ENCODE measurements at regions of chr20 and their contacts with region 1.

Region 1: DNA sequence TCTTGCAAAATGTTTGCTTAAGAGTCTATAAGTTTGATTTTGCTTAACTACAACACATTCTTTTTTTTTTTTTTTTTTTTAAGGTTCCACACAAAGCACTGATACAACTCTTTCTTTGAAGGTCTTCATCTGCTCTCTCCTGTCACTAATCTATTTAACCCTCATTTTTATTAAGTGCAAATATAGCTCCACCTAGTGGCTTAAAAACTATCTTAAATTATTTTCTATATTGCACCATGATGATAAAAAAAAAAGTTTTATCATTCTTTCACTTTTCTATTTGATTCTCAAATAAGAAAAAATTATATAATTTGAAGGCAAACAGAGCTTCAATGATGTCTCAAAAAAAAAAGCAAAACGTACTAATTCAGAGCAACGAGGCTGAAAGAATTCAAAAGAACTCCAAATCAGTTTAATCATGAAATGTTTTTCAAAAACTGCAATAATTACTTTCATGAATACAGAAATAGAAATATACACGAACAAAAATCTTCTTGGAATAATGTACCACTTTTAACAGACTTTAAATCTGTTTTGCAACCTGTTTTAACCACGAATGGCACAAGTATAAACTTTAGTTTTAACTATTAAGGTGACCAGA is 12.8 kb downstream of the ESF1 start:
- DNase-seq: peak; percentile 35
- CTCF ChIP-seq: peak; percentile 10

Region 2: DNA sequence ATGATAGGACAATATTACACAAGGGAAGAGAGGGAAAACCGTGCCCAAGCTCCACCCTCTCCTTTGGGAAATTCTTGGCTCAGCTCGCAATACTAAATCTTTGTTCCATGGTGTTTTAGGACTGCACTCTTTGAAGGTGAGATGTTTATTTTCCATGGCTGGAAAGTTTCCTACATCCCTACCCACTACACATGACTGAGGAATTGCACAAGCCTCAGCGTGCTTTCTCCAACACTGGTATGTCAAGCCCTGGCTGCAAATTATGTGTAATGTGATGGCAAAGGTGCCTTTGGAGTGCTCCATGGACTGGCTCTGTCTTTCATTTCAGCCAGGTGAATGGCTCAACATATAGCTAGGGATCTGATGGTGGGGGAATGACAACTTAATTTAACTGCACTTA is 416.5 kb before region 1 on chr20:
- in situ Hi-C with region 1: no loop called
- DNase-seq: no peak
- CTCF ChIP-seq: no peak

Region 3: DNA sequence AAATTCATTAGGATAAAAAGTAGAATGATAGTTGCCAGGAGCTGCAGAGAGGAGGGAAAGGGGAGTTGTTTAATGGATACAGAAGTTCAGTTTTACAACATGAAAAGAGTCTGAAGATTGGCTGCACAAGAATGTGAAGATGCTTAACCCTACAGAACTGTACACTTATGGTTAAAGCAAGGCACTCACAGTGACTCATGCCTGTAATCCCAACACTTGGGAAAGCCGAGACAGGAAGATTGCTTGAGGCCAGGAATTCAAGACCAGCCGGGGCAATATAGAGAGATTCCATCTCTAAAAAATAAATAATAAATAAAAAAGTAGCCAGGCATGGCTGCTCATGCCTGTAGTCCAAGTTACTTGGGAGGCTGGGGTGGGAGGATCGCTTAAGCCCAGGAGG is 307.3 kb before region 1 on chr20:
- in situ Hi-C with region 1: loop called (anchors 10 kb)
- DNase-seq: no peak
- CTCF ChIP-seq: no peak

Measured in GM13976 (cell line).